ENCODE measurements at regions of chr19 and their contacts with region 1.

Region 1: DNA sequence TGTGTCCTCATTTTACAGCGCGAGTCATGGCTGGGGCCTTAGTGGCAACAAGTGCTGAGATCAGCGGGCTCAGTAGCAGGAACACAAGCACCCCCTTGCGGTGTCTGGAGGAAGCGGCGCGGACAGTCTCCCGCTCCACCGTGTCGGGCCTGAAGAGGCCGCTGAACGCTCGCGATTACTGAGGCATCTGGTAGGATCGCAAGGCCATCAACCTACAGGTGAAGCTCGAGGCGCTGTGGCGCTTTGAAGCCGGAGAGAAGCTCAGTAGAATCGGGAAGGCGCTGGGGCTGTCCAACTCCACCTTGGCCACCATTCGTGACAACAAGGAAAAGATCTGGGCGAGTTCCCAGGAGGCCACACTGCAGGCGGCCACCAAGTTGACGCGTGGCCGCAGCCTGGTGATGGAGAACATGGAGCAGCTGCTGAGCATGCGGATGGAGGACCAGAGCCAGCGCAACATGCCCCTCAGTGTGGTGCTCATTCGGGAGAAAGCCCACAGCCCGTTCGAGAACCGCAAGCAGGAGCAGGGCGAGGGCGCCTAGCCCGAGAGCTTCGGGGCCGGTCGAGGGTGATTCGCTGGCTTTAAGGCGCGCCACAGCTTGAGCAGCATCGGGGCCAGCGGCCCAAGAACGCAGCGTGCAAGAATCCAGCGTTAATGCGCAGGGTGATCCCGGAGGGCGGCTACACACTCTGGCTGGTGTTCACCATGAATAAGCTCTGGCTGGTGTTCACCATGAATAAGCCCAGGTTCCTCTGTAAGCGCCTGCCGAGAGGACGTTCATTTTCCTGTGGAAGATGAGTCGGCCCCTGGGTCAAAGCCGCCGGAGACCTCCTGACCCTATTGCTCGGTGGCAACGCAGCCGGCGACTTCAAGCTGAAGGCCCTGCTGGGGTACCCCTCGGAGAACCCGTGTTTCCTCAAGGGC is 8.4 kb upstream of the MZF1 start:
- DNase-seq: peak; percentile 87 to 91 (median 88)
- H3K4me3 ChIP-seq: no peak overlapping the region
- H3K4me3 Mint-ChIP-seq: peak overlapping the region in 1 of 8 donors; percentile 26
- H3K27ac ChIP-seq: no peak overlapping the region
- H3K27ac Mint-ChIP-seq: peak overlapping the region; percentile 55 to 94 (median 87)
- H3K4me1 ChIP-seq: no peaks in the 10 kb centered on the region
- H3K4me1 Mint-ChIP-seq: peaks cover 17 to 42% (median 27%) of the 10 kb centered on the region in 4 donors
- H3K27me3 ChIP-seq: no peaks in the 10 kb centered on the region
- H3K27me3 Mint-ChIP-seq: no peaks in the 10 kb centered on the region

Region 2: DNA sequence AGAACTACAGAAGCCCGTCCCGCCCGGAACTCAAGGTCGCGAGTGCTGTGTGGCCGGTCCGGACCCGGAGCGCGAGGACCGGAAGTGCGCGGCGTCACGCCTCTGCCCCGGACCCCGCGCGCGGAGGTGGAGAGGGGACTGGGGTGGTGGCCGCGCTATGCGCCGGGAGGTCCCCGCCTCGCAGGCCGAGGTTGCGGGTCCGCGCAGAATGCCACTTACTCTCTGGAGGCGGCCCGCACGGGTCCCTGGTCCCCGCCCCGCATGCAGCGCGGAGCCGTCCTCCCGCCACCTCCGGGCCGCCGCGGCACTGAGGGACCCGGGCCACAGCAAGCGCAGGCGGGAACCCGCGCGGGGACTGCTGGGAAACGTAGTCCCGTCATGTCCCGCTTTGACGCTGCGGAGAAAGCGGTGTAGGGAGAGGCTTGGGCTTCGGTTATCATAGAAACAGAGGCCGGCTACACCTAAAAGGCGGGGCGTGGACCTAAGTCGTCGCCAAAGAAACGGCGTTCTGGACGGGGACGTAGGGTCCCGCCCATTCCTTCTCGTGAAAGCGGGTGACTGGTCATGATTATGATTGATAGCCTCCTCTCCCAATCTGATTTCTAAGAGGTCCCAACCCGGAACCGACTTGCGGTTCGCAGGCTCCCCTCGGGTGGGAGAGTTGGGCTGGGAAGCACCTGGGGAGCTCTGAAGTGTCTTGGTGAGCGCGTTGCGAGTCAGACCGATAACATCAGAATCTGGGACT is 200.6 kb before region 1 on chr19 and contains the start of gene ZNF837:
- CTCF ChIA-PET with region 1: no interaction called
- POLR2A ChIA-PET with region 1: no interaction called
- intact Hi-C with region 1: no loop called
- DNase-seq: peak; percentile 97 to 100 (median 99)
- H3K4me3 ChIP-seq: peak within 1 kb of the TSS; percentile 61 to 85
- H3K4me3 Mint-ChIP-seq: peak within 1 kb of the TSS; percentile 91 to 97 (median 95)
- H3K27ac ChIP-seq: peak within 1 kb of the TSS; percentile 89
- H3K27ac Mint-ChIP-seq: peak within 1 kb of the TSS; percentile 84 to 98 (median 97)
- H3K4me1 ChIP-seq: peaks cover 26% of the 10 kb centered on the region
- H3K4me1 Mint-ChIP-seq: peaks cover 18 to 42% (median 26%) of the 10 kb centered on the region in 4 donors
- H3K27me3 ChIP-seq: no peaks in the 10 kb centered on the region
- H3K27me3 Mint-ChIP-seq: no peaks in the 10 kb centered on the region
- total RNA-seq, gene ZNF837: 3.4 to 3.5 TPM

Region 3: GRCh38 chr19:58513694-58514563 is 67.6 kb before region 1 on chr19:
- CTCF ChIA-PET with region 1: interaction called, 260 read pairs
- POLR2A ChIA-PET with region 1: interaction called, 46 read pairs
- intact Hi-C with region 1: loop called (anchors 1 kb)
- DNase-seq: peak; percentile 93 to 95 (median 94)
- H3K4me3 ChIP-seq: peak overlapping the region in 1 of 2 donors; percentile 32
- H3K4me3 Mint-ChIP-seq: peak overlapping the region; percentile 74 to 88 (median 84)
- H3K27ac ChIP-seq: peak overlapping the region; percentile 61
- H3K27ac Mint-ChIP-seq: peak overlapping the region; percentile 82 to 93 (median 91)
- H3K4me1 ChIP-seq: peaks cover 31% of the 10 kb centered on the region
- H3K4me1 Mint-ChIP-seq: peaks cover 11 to 49% (median 29%) of the 10 kb centered on the region in 4 donors
- H3K27me3 ChIP-seq: no peaks in the 10 kb centered on the region
- H3K27me3 Mint-ChIP-seq: no peaks in the 10 kb centered on the region

Region 4: GRCh38 chr19:58558623-58559274 is 22.7 kb before region 1 on chr19:
- CTCF ChIA-PET with region 1: interaction called, 10 read pairs
- POLR2A ChIA-PET with region 1: interaction called, 17 read pairs
- intact Hi-C with region 1: no loop called
- DNase-seq: peak; percentile 99 to 100 (median 100)
- H3K4me3 ChIP-seq: peak overlapping the region; percentile 47 to 100
- H3K4me3 Mint-ChIP-seq: peak overlapping the region; percentile 92 to 98 (median 97)
- H3K27ac ChIP-seq: peak overlapping the region; percentile 99
- H3K27ac Mint-ChIP-seq: peak overlapping the region; percentile 97 to 99 (median 99)
- H3K4me1 ChIP-seq: peaks cover 79% of the 10 kb centered on the region
- H3K4me1 Mint-ChIP-seq: peaks cover 28 to 96% (median 61%) of the 10 kb centered on the region in 4 donors
- H3K27me3 ChIP-seq: no peaks in the 10 kb centered on the region
- H3K27me3 Mint-ChIP-seq: no peaks in the 10 kb centered on the region

Measured in CD4-positive, alpha-beta memory T cell (primary cell).